ENCODE measurements at regions of chr3 and their contacts with region 1.

Region 1: DNA sequence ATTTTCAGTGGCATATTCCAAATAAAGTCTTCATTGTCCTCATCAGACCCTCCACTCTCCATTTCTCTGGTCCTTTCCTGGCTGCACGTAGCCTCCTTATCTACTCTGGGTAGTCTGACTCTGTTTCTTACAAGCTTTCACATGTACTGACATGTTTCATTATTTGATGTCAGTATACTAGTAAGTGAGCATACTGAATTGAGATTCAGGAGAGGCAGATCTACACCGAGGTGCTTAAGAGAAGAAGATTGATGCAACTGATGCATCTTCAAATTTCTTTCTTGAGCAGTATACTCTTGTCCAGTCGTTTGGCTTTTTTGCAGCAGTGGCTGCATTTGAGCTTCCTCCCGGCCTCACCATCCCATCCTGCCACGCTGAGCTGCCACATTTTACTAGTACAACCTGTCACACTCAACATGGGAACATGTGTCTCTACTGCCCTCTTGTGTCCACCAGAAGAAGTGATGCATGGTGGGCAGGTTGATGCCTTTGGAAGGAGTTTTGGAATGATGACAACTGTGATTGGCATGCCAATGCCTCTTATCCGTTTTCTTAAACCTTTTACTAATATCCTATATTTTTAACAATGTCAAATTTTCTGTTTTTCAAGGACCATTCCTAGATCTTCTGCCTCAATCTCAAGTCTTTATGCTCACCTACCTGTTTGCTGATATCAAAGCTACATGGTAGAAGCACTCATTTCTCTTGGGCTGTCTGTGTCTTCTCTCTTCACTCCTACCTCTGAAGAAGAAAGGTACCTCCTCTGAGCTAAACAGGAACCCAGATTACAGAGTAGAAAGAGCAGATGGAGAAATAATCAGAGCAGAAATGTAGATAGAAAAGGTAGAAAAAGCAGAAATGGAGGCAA is 38.7 kb downstream of the GUCA1C start:
- DNase-seq: no peak
- H3K4me3 ChIP-seq: no peak overlapping the region
- CTCF ChIP-seq: peak; percentile 80

Region 2: GRCh38 chr3:108489771-108490170 is 425.2 kb before region 1 on chr3:
- CTCF ChIA-PET with region 1: interaction called, 16 read pairs
- POLR2A ChIA-PET with region 1: no interaction called
- DNase-seq: no peak
- H3K4me3 ChIP-seq: no peak overlapping the region
- CTCF ChIP-seq: peak; percentile 50

Region 3: DNA sequence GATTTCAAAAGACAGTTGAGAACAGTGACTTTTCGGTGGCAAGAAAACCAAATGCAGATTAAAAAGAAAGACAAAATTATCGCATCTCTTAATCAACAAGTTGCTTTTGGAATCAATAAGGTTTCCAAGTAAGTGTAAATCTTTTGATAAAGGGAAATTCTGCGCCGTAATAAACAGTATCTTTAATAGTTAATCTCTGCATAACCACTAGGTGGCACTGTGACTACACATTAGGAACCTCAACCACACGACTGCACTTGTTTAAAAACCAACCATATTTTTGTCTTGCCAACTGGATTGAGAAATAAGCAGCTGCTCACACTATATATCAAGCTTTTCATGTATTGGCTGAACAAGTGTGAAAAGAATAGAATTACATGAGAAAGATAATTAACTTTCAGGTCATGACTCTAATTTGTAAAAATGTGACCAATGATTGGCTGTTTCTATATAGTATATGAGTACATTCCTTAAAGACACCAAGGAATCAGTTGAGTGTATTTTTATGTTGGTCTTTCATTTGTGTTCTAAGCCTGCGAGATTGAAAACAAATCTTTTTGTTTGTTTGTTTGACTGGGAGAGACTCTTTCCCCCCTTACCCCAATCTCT is 252.8 kb before region 1 on chr3:
- CTCF ChIA-PET with region 1: interaction called, 60 read pairs
- POLR2A ChIA-PET with region 1: no interaction called
- DNase-seq: peak; percentile 38
- H3K4me3 ChIP-seq: no peak overlapping the region
- CTCF ChIP-seq: peak; percentile 44

Region 4: DNA sequence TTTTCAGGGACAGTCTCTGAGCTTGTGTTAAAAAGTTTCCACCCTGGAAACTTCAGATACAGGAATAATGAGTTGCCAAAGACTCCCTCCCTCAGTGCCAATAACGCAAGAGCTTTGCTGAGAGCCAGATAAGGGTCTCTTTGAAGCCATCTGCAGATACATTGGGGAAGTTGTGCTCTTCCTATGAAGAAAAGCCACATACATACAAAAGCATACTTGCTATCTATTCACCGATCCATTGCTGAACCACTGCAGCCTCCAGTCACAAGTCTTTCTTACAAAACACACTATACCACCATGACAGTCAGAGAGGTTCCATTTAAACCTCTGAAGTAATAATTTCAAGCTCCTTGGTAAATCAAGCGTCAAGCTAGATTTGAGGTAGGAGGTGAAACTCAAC is 147.8 kb before region 1 on chr3:
- CTCF ChIA-PET with region 1: no interaction called
- POLR2A ChIA-PET with region 1: no interaction called
- DNase-seq: no peak
- H3K4me3 ChIP-seq: no peak overlapping the region
- CTCF ChIP-seq: no peak

Measured in AG04449 (cell line).